Endothelial cell of umbilical vein (primary cell): ENCODE measurements at regions of chr2 and their contacts with region 1.

Region 1: GRCh38 chr2:187547353-187547979 is 6.8 kb downstream of the TFPI start:
- DNase-seq: peak; percentile 91
- H3K4me3 ChIP-seq: peak overlapping the region in 1 of 3 experiments; percentile 22
- H3K27ac ChIP-seq: peak overlapping the region; percentile 61
- H3K4me1 ChIP-seq: peaks cover 91% of the 10 kb centered on the region
- H3K27me3 ChIP-seq: no peaks in the 10 kb centered on the region
- CTCF ChIP-seq: no peak
- POLR2A ChIP-seq: peak; percentile 70

Region 2: GRCh38 chr2:187567126-187567525 is 19.7 kb after region 1 on chr2:
- CTCF ChIA-PET with region 1: interaction called, 10 read pairs
- POLR2A ChIA-PET with region 1: interaction called, 13 read pairs
- dilution Hi-C with region 1: no loop called
- intact Hi-C with region 1: loop called (anchors 1 kb)
- DNase-seq: peak; percentile 40
- H3K4me3 ChIP-seq: no peak overlapping the region
- H3K27ac ChIP-seq: no peak overlapping the region
- H3K4me1 ChIP-seq: peaks cover 30% of the 10 kb centered on the region
- H3K27me3 ChIP-seq: no peaks in the 10 kb centered on the region
- CTCF ChIP-seq: no peak
- POLR2A ChIP-seq: no peak

Region 3: DNA sequence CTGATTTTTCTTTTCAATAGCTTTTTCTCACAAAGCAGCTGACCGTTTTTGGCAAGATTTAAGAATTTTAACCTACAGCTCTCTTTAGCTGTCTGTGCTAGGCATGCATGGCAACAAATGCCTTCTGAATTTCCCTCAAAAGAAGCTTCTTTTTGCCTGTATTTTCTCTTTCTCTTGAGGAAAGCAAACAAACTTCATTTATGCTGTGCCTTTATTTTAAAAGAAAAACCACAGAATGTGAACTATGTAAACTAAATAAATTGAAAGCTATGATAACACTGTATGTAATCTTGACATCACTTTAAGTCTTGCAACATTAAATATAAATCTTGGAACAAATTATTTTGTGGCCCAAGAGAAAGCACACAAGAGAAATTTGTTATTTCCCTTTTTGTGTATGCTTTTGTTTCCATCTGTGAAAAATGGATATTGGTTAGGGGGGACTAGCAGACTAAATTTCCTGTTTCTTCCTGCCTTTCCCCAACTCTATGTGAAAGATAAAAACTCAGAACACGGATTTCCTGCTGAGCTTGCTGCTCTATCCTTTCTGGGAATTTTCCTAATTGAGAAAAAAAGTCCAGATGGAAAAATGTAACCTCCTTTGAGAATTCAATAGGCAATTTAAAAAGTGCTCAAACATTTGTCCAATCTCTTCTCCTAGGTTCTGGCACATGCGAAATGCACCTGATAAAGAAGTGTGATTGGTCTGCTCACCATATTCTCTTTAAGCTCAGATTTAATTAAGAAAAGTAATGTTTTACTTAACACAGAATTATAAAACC is 27.7 kb after region 1 on chr2:
- CTCF ChIA-PET with region 1: interaction called, 45 read pairs
- POLR2A ChIA-PET with region 1: interaction called, 13 read pairs
- dilution Hi-C with region 1: no loop called
- intact Hi-C with region 1: no loop called
- DNase-seq: peak; percentile 90
- H3K4me3 ChIP-seq: peak overlapping the region in 1 of 3 experiments; percentile 19
- H3K27ac ChIP-seq: peak overlapping the region; percentile 57
- H3K4me1 ChIP-seq: peaks cover 27% of the 10 kb centered on the region
- H3K27me3 ChIP-seq: no peaks in the 10 kb centered on the region
- CTCF ChIP-seq: no peak
- POLR2A ChIP-seq: no peak